SK-N-SH (cell line): ENCODE measurements at regions of chr22 and their contacts with region 1.

Region 1: DNA sequence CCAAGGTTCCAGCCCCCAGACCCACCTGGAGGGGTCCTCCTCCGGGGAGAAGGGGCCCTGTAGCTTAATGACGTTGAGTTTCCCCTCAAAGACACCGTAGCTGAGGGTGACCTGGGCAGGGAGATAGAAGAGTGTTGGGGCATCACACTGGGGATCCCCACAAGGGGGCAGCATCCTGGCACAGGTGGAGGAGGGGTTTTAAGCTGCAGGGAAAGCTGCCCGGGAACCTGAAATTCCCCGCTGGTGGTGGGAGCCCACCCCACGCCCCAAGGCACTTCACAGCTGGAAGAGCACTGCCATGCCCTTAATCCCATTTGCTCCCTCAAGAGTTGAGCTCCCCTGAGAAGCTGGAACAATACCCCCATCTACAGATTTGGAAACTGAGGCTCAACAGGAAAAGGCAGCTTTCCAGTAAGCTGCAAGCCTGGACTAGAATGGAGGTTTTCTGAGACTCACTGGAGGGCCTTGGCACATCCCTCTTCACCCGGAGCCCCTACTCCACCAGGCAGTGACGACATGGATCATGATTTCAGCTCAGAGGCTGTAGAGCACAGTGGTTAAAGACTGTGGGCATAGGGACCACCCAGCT is 13.7 kb downstream of the MFNG start:
- DNase-seq: peak; percentile 75
- H3K4me3 ChIP-seq: no peak overlapping the region
- H3K27ac ChIP-seq: no peak overlapping the region
- H3K4me1 ChIP-seq: no peaks in the 10 kb centered on the region; a peak in 1 of 4 replicates
- H3K27me3 ChIP-seq: no peaks in the 10 kb centered on the region
- CTCF ChIP-seq: peak; percentile 63
- EP300 ChIP-seq: no peak
- RAD21 ChIP-seq: peak; percentile 53

Region 2: GRCh38 chr22:37486224-37486845 is 13.8 kb after region 1 on chr22 and contains the start of gene MFNG:
- CTCF ChIA-PET with region 1: interaction called, 22 read pairs
- POLR2A ChIA-PET with region 1: no interaction called
- DNase-seq: peak; percentile 91
- H3K4me3 ChIP-seq: no peak within 1 kb of the TSS
- H3K27ac ChIP-seq: no peak within 1 kb of the TSS
- H3K4me1 ChIP-seq: peaks cover 0 to 13% of the 10 kb centered on the region in 2 experiments; a peak in 1 of 4 replicates
- H3K27me3 ChIP-seq: no peaks in the 10 kb centered on the region
- CTCF ChIP-seq: no peak
- EP300 ChIP-seq: no peak
- RAD21 ChIP-seq: no peak
- polyA plus RNA-seq, gene MFNG: 0.18 and 0.34 TPM in 2 replicates

Region 3: DNA sequence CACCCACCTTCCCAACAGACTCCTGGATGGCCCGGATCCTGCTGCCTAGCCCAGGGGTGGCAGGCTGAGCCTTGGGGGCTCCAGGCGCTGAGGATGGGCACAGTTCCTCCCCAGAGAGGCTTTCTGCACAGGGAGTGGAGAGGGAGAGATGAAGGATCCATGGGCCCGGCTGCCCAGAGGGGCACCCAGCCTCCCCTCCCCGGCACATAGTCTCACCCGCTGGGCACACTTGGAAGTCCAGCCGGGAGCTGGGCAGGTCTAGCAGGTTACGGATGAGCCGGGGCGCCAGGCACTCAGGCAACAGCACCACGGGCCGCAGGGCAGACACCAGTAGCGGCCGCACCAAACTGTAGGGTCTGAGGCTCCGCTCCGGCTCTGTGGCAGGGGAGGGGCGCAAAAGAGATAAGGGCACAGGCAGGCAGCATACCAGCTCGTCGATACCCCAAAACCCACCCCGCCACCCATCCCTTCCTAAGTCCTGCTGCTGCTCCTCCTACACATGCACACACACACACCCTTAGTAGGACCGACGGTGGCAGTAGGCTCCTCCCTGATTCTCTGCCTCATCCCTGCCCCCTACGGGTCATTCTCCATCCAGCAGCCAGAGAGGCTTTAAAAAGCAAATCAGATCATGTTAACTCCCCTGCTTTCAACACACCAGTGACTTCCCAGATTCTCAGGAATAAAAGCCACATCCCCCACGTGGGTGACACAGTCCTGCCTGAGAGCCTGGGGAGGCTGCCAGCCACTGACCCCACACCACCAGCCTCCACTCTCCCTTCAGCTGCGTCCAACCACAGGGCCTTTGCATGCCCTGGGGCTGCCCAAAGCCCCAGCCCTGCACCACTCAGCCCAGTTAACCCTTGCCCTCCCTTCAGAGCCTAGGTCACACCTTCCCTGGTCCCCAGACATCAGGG is 20.2 kb after region 1 on chr22:
- CTCF ChIA-PET with region 1: interaction called, 35 read pairs
- POLR2A ChIA-PET with region 1: no interaction called
- DNase-seq: peak; percentile 69
- H3K4me3 ChIP-seq: no peak overlapping the region; a peak in 1 of 4 replicates
- H3K27ac ChIP-seq: no peak overlapping the region
- H3K4me1 ChIP-seq: peaks cover 6% of the 10 kb centered on the region in 2 experiments; a peak in 2 of 4 replicates
- H3K27me3 ChIP-seq: no peaks in the 10 kb centered on the region
- CTCF ChIP-seq: peak; percentile 57
- EP300 ChIP-seq: no peak
- RAD21 ChIP-seq: 0 out of 2 replicates have a peak, but pooled peaks have one; percentile 11

Region 4: GRCh38 chr22:37498289-37498909 is 25.9 kb after region 1 on chr22:
- CTCF ChIA-PET with region 1: interaction called, 35 read pairs
- POLR2A ChIA-PET with region 1: no interaction called
- DNase-seq: peak; percentile 90
- H3K4me3 ChIP-seq: no peak overlapping the region
- H3K27ac ChIP-seq: no peak overlapping the region; a peak in 1 of 4 replicates
- H3K4me1 ChIP-seq: peaks cover 16 to 53% of the 10 kb centered on the region in 2 experiments
- H3K27me3 ChIP-seq: no peaks in the 10 kb centered on the region
- CTCF ChIP-seq: peak; percentile 40
- EP300 ChIP-seq: no peak
- RAD21 ChIP-seq: peak; percentile 54

Region 5: DNA sequence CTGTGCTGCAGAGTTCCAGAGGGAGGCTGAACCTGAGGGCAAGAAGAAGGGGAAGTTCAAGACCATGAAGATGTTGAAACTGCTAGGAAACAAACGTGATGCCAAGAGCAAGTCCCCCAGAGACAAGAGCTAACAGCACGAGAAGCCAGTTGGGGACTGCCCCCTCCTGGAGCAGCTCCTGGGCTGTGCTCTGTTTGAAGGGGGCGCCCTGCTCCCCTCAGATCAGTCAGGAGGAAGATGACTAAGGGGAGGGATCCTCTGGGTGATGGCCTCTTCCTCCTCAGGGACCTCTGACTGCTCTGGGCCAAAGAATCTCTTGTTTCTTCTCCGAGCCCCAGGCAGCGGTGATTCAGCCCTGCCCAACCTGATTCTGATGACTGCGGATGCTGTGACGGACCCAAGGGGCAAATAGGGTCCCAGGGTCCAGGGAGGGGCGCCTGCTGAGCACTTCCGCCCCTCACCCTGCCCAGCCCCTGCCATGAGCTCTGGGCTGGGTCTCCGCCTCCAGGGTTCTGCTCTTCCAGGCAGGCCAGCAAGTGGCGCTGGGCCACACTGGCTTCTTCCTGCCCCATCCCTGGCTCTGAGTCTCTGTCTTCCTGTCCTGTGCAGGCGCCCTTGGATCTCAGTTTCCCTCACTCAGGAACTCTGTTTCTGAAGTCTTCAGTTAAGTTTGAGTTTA is 468.3 kb after region 1 on chr22:
- CTCF ChIA-PET with region 1: no interaction called
- POLR2A ChIA-PET with region 1: no interaction called
- DNase-seq: no peak
- H3K4me3 ChIP-seq: no peak overlapping the region
- H3K27ac ChIP-seq: no peak overlapping the region
- H3K4me1 ChIP-seq: no peaks in the 10 kb centered on the region
- H3K27me3 ChIP-seq: no peaks in the 10 kb centered on the region
- CTCF ChIP-seq: no peak
- EP300 ChIP-seq: no peak
- RAD21 ChIP-seq: no peak